Body of pancreas (tissue), 4 donors: ENCODE measurements at regions of chr2 and their contacts with region 1.

Region 1: GRCh38 chr2:119517433-119517832 is 6.8 kb downstream of the SCTR start:
- DNase-seq: peak; percentile 81 to 87 (median 86)
- ATAC-seq: peak; percentile 91
- H3K4me3 ChIP-seq: no peak overlapping the region
- H3K27ac ChIP-seq: peak overlapping the region in 3 of 4 donors; percentile 20 to 59 (median 33)
- H3K4me1 ChIP-seq: peaks cover 41% of the 10 kb centered on the region
- H3K27me3 ChIP-seq: peaks cover 0 to 2% of the 10 kb centered on the region in 2 donors
- CTCF ChIP-seq: peak; percentile 67 to 95 (median 82)
- POLR2A ChIP-seq: no peak

Region 2: GRCh38 chr2:119598596-119599263 is 81.3 kb after region 1 on chr2:
- intact Hi-C with region 1: loop called (anchors 10 kb)
- DNase-seq: peak; percentile 22 to 76 (median 56)
- ATAC-seq: peak; percentile 95
- H3K4me3 ChIP-seq: no peak overlapping the region
- H3K27ac ChIP-seq: peak overlapping the region in 3 of 4 donors; percentile 53 to 72 (median 57)
- H3K4me1 ChIP-seq: peaks cover 16% of the 10 kb centered on the region
- H3K27me3 ChIP-seq: no peaks in the 10 kb centered on the region
- CTCF ChIP-seq: no peak
- POLR2A ChIP-seq: peak in 1 of 3 donors; percentile 10

Region 3: DNA sequence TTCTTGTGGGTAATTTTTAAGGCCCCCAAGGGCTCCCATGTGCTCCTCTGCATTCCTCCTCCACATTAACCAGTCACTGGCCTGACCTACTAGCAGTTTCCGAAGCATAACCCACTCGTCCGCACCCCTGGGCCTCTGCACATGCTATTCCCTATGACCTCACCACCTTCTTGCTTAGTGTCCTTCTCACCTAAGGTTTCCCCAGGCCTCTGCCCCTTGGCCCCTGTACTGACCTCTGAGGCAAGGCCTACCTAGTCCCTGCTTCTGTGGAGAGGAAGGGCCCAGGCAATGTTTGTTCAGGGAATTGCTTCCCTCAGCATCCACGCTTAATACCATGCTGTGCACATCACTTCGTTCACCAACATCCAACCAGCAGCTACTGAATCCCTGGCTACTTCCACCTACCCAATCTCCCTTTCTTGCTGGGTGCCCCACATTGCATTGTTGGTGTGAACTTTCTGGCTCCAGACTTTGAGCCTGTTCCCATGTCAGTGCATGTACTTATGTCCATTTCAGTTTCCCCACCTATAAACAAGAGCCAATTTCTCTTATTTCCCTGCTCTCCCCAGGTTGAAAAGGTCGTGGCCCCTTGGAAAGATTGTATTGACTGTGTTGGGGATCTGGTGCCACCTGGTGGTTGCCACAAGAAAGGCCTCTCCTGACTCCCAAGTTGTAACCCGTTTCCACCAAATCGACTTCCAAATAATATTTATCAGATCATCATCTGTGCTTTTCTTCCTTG is 142.3 kb after region 1 on chr2:
- intact Hi-C with region 1: loop called (anchors 5 kb)
- DNase-seq: peak; percentile 44 to 63 (median 60)
- ATAC-seq: peak; percentile 62
- H3K4me3 ChIP-seq: no peak overlapping the region
- H3K27ac ChIP-seq: no peak overlapping the region
- H3K4me1 ChIP-seq: no peaks in the 10 kb centered on the region
- H3K27me3 ChIP-seq: no peaks in the 10 kb centered on the region
- CTCF ChIP-seq: peak; percentile 73 to 90 (median 82)
- POLR2A ChIP-seq: no peak

Region 4: GRCh38 chr2:119809339-119810048 is 292.1 kb after region 1 on chr2:
- intact Hi-C with region 1: no loop called
- DNase-seq: peak in 1 of 4 donors; percentile 9
- ATAC-seq: peak; percentile 45
- H3K4me3 ChIP-seq: no peak overlapping the region
- H3K27ac ChIP-seq: no peak overlapping the region
- H3K4me1 ChIP-seq: peaks cover 8% of the 10 kb centered on the region
- H3K27me3 ChIP-seq: no peaks in the 10 kb centered on the region
- CTCF ChIP-seq: no peak
- POLR2A ChIP-seq: no peak

Region 5: GRCh38 chr2:120856421-120856862 is 1339.0 kb after region 1 on chr2:
- intact Hi-C with region 1: no loop called
- DNase-seq: peak in 1 of 4 donors; percentile 12
- ATAC-seq: no peak
- H3K4me3 ChIP-seq: no peak overlapping the region
- H3K27ac ChIP-seq: no peak overlapping the region
- H3K4me1 ChIP-seq: no peaks in the 10 kb centered on the region
- H3K27me3 ChIP-seq: no peaks in the 10 kb centered on the region
- CTCF ChIP-seq: no peak
- POLR2A ChIP-seq: no peak